Breast epithelium (tissue), 4 donors: ENCODE measurements at regions of chr2 and their contacts with region 1.

Region 1: DNA sequence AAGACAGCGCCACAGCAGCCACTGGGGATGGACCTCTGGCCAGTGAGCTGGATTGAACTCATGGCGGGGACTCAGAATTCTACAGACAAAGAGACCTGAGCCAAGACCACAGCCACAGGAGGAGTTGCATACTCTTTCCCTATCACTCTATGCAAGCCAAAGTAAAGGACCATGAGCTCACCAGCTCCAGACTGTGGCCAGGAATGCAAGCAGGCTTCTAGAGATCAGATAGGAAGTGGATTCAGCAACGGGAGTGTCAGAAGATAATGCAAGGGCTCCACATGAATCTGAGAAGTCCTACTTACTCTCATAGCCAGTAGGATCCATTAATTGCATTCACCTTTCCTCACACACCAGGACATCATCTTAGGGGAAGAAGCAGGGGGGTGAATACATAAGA is 415.4 kb upstream of the POU3F3 start:
- DNase-seq: no peak
- H3K4me3 ChIP-seq: no peak overlapping the region
- H3K27ac ChIP-seq: no peak overlapping the region
- H3K4me1 ChIP-seq: no peaks in the 10 kb centered on the region
- H3K27me3 ChIP-seq: no peaks in the 10 kb centered on the region
- CTCF ChIP-seq: no peak
- POLR2A ChIP-seq: no peak

Region 2: DNA sequence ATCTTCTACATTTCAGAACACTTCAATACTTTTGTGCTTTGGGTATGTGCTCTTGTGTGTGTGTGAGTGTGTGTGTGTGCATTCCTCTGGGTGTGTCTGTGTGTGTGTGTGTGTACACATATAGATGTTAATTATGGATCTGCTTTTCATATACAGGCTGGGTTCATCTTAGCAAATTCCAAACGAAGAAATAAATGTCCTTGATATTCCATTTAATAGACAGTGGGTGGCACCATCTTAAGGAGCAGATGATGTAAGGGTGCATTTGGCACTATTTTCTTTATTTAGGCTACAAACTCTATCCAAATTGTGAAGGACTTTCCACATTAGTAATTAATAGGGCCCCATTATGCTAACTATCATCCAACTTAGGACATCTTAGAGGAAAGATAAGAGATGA is 10.3 kb before region 1 on chr2:
- intact Hi-C with region 1: no loop called
- DNase-seq: no peak
- H3K4me3 ChIP-seq: no peak overlapping the region
- H3K27ac ChIP-seq: no peak overlapping the region
- H3K4me1 ChIP-seq: no peaks in the 10 kb centered on the region
- H3K27me3 ChIP-seq: no peaks in the 10 kb centered on the region
- CTCF ChIP-seq: no peak
- POLR2A ChIP-seq: no peak

Region 3: DNA sequence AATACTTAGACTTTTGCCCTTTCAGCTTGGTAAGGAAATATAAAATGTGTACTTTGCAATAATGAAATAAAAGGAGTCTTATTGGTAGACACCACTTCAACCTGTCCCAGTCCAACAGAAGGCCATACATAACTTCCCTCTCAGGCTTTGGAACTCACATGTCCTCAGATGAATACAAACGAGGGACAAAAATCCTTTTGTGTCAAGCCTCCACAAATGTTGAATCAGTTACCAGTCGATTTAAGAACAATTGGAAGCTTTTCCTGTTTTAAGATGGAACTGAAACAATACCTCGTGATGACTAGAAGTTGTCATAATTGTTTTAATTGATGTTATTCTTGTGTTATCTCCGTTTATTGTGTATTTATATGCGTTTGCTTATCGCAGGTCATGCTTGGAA is 30.4 kb after region 1 on chr2:
- intact Hi-C with region 1: loop called (anchors 2 kb)
- DNase-seq: no peak
- H3K4me3 ChIP-seq: no peak overlapping the region
- H3K27ac ChIP-seq: no peak overlapping the region
- H3K4me1 ChIP-seq: no peaks in the 10 kb centered on the region
- H3K27me3 ChIP-seq: no peaks in the 10 kb centered on the region
- CTCF ChIP-seq: no peak
- POLR2A ChIP-seq: no peak